ENCODE measurements at regions of chr17 and their contacts with region 1.

Region 1: DNA sequence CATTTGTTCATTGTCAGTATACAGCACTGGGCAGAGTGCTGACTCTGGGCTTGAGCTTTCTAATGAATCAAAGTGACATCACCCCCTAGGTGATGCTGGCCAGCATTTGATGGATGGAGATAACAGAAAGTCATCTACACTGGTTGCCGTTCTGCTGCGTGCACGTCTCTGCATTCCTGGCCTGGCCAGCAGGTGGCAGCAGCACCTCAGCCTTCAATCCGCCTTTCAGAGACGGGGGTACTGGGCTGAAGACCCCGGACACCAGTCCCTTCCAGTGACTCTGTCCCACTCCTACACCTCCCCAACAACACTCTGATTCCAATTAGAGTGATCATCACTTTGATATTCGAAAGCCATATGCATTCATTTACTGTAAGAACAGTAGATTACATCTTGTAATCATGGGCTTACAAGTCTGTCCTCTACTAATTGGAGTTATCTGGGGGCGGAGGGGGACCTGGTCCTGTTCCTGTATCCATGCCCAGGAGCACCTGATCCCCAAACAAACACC is 6.0 kb downstream of the CPSF4L start:
- DNase-seq: peak; percentile 78
- ATAC-seq: peak; percentile 81

Region 2: GRCh38 chr17:73369111-73369521 is 113.4 kb after region 1 on chr17:
- intact Hi-C with region 1: loop called (anchors 2 kb)
- DNase-seq: no peak
- ATAC-seq: no peak